Left ventricle myocardium superior (tissue), 1 donor: ENCODE measurements at regions of chr2 and their contacts with region 1.

Region 1: DNA sequence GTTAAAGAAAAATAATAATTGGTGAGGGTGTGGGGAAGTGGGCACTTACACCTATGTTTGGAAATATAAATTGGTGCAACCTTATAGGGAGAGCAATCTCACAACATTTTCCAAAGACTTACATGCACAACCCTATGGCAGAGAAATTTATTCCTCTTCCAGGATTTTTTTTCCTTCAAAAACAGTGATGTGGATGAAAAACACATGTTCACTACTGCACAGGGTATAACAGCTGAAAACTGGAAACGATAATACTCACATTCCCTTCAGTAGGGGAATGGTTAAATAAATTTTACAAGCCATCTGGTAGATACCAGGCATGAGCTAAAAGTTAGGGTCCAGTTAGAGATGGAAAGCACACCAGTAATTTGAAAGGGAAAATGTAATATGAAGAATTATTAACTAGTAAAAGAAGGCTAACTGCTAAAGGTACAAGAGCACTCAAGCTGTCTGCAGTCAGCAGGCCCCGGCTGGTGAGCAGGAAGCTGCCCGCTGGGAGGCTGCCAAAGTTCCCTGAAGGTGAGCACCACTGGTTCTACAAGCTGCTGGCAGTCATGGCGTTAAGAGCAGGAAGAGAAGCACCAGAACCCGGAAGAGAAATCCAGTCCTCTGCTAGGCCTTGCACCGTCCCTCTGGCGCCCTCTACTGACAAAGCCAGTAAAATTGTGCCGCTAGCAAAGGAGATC is 28.4 kb upstream of the CASP8 start:
- DNase-seq: peak; percentile 82
- ATAC-seq: peak; percentile 88

Region 2: GRCh38 chr2:201182650-201183364 is 49.1 kb before region 1 on chr2 and contains the start of gene CASP10:
- intact Hi-C with region 1: loop called (anchors 2 kb)
- DNase-seq: no peak
- ATAC-seq: peak; percentile 77
- total RNA-seq, gene CASP10: 6.4 TPM

Region 3: GRCh38 chr2:201363857-201364560 is 132.1 kb after region 1 on chr2:
- intact Hi-C with region 1: loop called (anchors 5 kb)
- DNase-seq: no peak
- ATAC-seq: peak; percentile 66